Activated naive CD4-positive, alpha-beta T cell treated with anti-CD3 and anti-CD28 coated beads, Interleukin-2, amount 10 ng/mL, durations not matched to agents 7 days and 5 days (primary cell): ENCODE measurements at regions of chr2 and their contacts with region 1.

Region 1: DNA sequence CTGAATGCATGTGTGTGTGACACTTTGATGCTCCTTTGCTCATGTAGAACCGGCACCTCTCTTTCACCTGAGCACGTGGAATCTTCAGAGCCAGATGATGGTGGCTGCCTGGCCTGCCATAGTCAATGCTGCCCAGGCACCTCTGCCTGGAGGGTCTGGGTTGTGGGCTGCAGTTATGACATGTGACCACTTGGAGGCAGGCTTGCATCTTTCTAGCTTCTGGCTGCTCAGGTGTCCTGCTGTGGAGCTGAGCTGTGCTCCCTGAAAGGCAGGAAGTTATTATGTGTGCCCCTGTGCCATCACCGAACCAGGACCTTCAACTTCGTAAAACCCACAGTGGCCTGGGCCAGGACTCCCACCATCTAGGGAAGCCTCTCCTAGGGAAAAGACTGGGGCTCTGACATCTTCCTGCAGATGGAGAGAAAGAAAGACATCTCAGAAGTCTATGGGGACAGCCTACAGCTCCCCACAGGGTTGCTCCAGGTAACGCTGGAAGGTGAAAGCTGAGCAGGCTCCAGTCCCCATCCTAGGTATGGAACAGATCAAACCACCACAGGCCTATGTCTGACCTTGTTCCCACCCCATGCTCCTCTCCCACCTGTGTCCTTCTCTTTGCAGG is 30.2 kb downstream of the PSD4 start:
- DNase-seq: peak; percentile 84
- H3K4me3 Mint-ChIP-seq: no peak overlapping the region
- H3K27ac Mint-ChIP-seq: peak overlapping the region; percentile 73
- H3K4me1 Mint-ChIP-seq: peaks cover 25% of the 10 kb centered on the region
- H3K27me3 Mint-ChIP-seq: no peaks in the 10 kb centered on the region

Region 2: DNA sequence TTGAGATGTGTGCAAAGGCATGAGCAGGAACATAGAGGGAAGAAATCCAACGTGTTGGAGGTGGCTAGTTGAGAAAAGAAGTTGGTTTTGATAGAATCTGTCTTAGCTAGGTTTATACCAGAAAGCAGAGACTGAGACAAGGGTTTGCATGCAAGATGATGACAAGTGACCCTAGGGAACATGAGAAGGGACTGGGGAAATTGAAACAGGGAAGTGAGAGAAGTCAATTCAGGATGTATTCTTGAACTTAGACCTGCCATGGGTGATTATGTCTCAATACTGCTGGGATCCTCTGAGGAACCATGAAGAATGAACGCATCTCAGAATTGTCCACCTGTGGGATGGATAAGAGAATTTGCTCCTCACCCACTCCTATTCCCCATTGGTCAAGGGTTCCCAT is 178.3 kb before region 1 on chr2:
- CTCF ChIA-PET with region 1: no interaction called
- DNase-seq: no peak
- H3K4me3 Mint-ChIP-seq: no peak overlapping the region
- H3K27ac Mint-ChIP-seq: no peak overlapping the region
- H3K4me1 Mint-ChIP-seq: no peaks in the 10 kb centered on the region
- H3K27me3 Mint-ChIP-seq: peaks cover 38% of the 10 kb centered on the region

Region 3: GRCh38 chr2:113138428-113139322 is 65.3 kb before region 1 on chr2:
- CTCF ChIA-PET with region 1: interaction called, 209 read pairs
- DNase-seq: peak; percentile 61
- H3K4me3 Mint-ChIP-seq: no peak overlapping the region
- H3K27ac Mint-ChIP-seq: peak overlapping the region; percentile 42
- H3K4me1 Mint-ChIP-seq: peaks cover 28% of the 10 kb centered on the region
- H3K27me3 Mint-ChIP-seq: peaks cover 7% of the 10 kb centered on the region

Region 4: GRCh38 chr2:113219889-113220641 is 16.1 kb after region 1 on chr2:
- CTCF ChIA-PET with region 1: interaction called, 10 read pairs
- DNase-seq: no peak
- H3K4me3 Mint-ChIP-seq: no peak overlapping the region
- H3K27ac Mint-ChIP-seq: no peak overlapping the region
- H3K4me1 Mint-ChIP-seq: peaks cover 26% of the 10 kb centered on the region
- H3K27me3 Mint-ChIP-seq: peaks cover 31% of the 10 kb centered on the region

Region 5: GRCh38 chr2:113248997-113249770 is 45.2 kb after region 1 on chr2:
- CTCF ChIA-PET with region 1: interaction called, 13 read pairs
- DNase-seq: peak; percentile 85
- H3K4me3 Mint-ChIP-seq: no peak overlapping the region
- H3K27ac Mint-ChIP-seq: peak overlapping the region; percentile 93
- H3K4me1 Mint-ChIP-seq: peaks cover 57% of the 10 kb centered on the region
- H3K27me3 Mint-ChIP-seq: no peaks in the 10 kb centered on the region

Region 6: DNA sequence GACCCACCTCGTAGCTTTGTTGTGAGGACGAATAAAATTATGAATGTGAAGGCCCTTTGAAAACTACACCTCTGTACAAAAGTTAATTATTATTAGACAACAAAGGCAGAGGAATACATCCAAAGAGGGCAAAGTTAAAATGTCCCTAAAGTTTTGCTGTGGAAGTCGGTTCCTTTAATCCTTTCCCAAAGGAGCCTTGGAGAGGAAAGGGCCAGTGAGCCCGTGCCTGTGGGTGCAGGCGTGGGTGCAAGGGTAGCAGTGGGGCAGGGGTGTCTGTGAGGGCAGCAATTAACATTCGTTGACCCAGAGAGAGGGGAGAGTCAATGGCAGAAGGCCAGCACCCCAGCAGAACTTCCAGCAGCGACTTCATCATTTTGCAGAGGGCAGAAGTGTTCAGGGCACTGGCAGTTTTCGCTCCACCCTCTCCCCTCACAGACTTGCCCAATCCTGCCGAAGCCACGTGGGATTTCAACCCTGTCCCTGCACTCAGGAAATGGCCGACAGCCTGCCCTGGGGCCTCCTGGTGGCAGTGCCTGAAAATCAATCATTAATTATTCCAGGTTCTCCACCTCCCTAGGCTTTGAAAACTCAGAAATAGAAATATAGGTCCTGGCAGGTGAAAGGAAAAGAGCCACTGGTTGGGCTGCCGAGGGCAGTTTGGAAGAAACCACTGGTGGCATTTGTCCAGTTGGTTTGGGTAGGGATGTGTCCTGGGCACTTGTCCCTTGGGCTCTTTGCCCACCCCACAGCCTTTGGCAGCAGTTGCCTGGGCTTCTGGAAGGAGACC is 78.9 kb after region 1 on chr2:
- CTCF ChIA-PET with region 1: no interaction called
- DNase-seq: no peak
- H3K4me3 Mint-ChIP-seq: no peak overlapping the region
- H3K27ac Mint-ChIP-seq: no peak overlapping the region
- H3K4me1 Mint-ChIP-seq: no peaks in the 10 kb centered on the region
- H3K27me3 Mint-ChIP-seq: peaks cover 78% of the 10 kb centered on the region

Region 7: DNA sequence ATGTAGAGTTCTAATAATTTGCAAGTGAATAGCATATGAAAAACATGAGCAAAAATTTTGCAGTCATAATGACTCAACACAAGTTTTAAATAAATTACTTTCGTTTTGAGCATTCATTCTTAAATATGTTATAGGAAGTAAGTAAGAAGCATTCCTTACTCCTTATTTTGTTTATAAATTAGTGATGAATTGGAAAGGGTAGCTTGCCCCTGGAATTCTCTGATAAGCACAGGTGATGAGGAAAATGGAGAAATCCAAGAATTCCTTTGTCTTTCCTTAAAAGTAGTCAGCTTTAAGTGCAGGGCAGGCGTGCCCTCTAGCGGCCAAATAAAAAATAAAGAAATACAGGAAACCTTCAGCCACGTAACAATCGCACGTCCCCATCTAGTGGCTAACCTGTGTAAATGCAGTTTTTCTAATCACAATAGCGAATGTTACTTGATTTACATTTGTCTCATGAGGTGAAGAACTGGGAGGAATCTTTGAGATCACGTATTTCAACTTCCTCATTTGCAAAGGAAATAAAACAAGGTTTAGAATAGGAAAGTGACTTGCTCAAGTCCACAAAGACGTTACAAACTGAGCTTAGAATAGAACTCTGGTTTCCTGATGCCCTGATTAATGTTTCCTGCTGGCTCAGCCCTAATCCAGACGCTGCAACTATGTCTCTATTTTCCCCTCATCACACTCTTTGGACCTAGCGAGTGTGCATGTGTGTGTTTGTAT is 186.3 kb after region 1 on chr2:
- CTCF ChIA-PET with region 1: interaction called, 21 read pairs
- DNase-seq: peak; percentile 63
- H3K4me3 Mint-ChIP-seq: peak overlapping the region; percentile 53
- H3K27ac Mint-ChIP-seq: peak overlapping the region; percentile 78
- H3K4me1 Mint-ChIP-seq: peaks cover 15% of the 10 kb centered on the region
- H3K27me3 Mint-ChIP-seq: peaks cover 23% of the 10 kb centered on the region